MCF 10A (cell line): ENCODE measurements at regions of chr11 and their contacts with region 1.

Region 1: GRCh38 chr11:74255741-74256369 is 55.6 kb downstream of the P4HA3 start:
- DNase-seq: peak; percentile 79
- H3K4me3 Mint-ChIP-seq: no peak overlapping the region
- H3K27ac Mint-ChIP-seq: no peak overlapping the region
- H3K4me1 Mint-ChIP-seq: peaks cover 15% of the 10 kb centered on the region
- H3K27me3 Mint-ChIP-seq: no peaks in the 10 kb centered on the region
- CTCF ChIP-seq: peak; percentile 76

Region 2: DNA sequence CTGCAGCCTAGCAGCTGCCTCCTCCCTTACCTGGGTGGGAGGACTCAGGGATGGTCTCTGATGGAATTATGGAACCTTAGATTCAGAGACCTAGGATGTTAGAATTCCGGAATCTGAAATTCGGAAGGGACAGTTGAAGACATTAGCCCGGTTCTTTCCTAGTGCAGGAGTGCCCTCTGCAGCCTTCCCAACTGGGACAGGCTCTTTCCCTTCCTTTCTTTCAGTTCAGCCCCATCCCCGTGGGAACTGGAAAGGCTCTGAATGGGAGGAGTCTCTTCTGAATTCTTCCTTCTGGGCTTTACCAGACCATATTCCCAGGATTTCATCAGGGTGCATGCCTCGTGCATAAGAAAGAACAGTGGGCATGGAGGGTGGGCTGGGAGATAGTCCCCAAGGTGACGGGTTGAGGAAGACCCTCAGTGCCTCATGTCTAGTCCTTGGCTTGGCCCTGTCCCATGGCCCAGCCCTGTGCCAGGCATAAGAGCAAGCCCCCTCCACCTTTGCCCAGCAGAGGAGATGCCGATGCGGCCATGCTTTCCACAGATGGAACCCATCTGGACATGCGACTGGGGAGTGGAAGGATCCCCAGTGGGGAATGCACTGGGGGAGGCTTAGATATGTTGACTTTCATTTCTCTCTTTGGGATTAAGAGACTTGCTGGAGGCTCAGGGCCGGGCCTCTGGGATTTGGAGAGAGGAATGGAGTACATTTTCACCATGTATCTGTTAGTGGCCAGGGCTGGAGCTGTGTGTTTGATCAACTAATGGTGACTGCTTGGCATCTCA is 290.6 kb before region 1 on chr11:
- CTCF ChIA-PET with region 1: interaction called, 4 read pairs
- POLR2A ChIA-PET with region 1: no interaction called
- intact Hi-C with region 1: loop called (anchors 1 kb)
- DNase-seq: no peak
- H3K4me3 Mint-ChIP-seq: no peak overlapping the region
- H3K27ac Mint-ChIP-seq: no peak overlapping the region
- H3K4me1 Mint-ChIP-seq: peaks cover 7% of the 10 kb centered on the region
- H3K27me3 Mint-ChIP-seq: peaks cover 8% of the 10 kb centered on the region
- CTCF ChIP-seq: no peak

Region 3: GRCh38 chr11:74269161-74269811 is 13.4 kb after region 1 on chr11:
- CTCF ChIA-PET with region 1: interaction called, 17 read pairs
- POLR2A ChIA-PET with region 1: interaction called, 4 read pairs
- intact Hi-C with region 1: no loop called
- DNase-seq: peak; percentile 83
- H3K4me3 Mint-ChIP-seq: no peak overlapping the region
- H3K27ac Mint-ChIP-seq: no peak overlapping the region
- H3K4me1 Mint-ChIP-seq: peaks cover 19% of the 10 kb centered on the region
- H3K27me3 Mint-ChIP-seq: no peaks in the 10 kb centered on the region
- CTCF ChIP-seq: no peak

Region 4: GRCh38 chr11:74321487-74322188 is 65.8 kb after region 1 on chr11:
- CTCF ChIA-PET with region 1: interaction called, 11 read pairs
- POLR2A ChIA-PET with region 1: no interaction called
- intact Hi-C with region 1: loop called (anchors 1 kb)
- DNase-seq: peak; percentile 58
- H3K4me3 Mint-ChIP-seq: no peak overlapping the region
- H3K27ac Mint-ChIP-seq: no peak overlapping the region
- H3K4me1 Mint-ChIP-seq: peaks cover 11% of the 10 kb centered on the region
- H3K27me3 Mint-ChIP-seq: no peaks in the 10 kb centered on the region
- CTCF ChIP-seq: peak; percentile 34

Region 5: GRCh38 chr11:74388678-74389327 is 132.9 kb after region 1 on chr11:
- CTCF ChIA-PET with region 1: interaction called, 15 read pairs
- POLR2A ChIA-PET with region 1: no interaction called
- intact Hi-C with region 1: loop called (anchors 2 kb)
- DNase-seq: peak; percentile 63
- H3K4me3 Mint-ChIP-seq: no peak overlapping the region
- H3K27ac Mint-ChIP-seq: no peak overlapping the region
- H3K4me1 Mint-ChIP-seq: peaks cover 14% of the 10 kb centered on the region
- H3K27me3 Mint-ChIP-seq: no peaks in the 10 kb centered on the region
- CTCF ChIP-seq: peak; percentile 52

Region 6: GRCh38 chr11:74443071-74443864 is 187.4 kb after region 1 on chr11:
- CTCF ChIA-PET with region 1: interaction called, 210 read pairs
- POLR2A ChIA-PET with region 1: interaction called, 10 read pairs
- intact Hi-C with region 1: loop called (anchors 1 kb)
- DNase-seq: peak; percentile 71
- H3K4me3 Mint-ChIP-seq: no peak overlapping the region
- H3K27ac Mint-ChIP-seq: peak overlapping the region; percentile 47
- H3K4me1 Mint-ChIP-seq: peaks cover 11% of the 10 kb centered on the region
- H3K27me3 Mint-ChIP-seq: no peaks in the 10 kb centered on the region
- CTCF ChIP-seq: peak; percentile 53